Activated T-helper 2 cell treated with anti-CD3 and anti-CD28 coated beads, Interferon-gamma antibody, Interleukin-2, Interleukin-4, amounts not matched to agents 10 μg/mL and 5 μg/mL and 100 μg/mL, durations not matched to agents 14 hours and 24 hours and 36 hours (primary cell): ENCODE measurements at regions of chr15 and their contacts with region 1.

Region 1: GRCh38 chr15:69760890-69761568 is 308.4 kb downstream of the RPLP1 start:
- DNase-seq: peak; percentile 85
- H3K4me3 Mint-ChIP-seq: peak overlapping the region; percentile 37
- H3K27ac Mint-ChIP-seq: peak overlapping the region; percentile 92
- H3K4me1 Mint-ChIP-seq: peaks cover 65% of the 10 kb centered on the region
- H3K27me3 Mint-ChIP-seq: peaks cover 6% of the 10 kb centered on the region

Region 2: DNA sequence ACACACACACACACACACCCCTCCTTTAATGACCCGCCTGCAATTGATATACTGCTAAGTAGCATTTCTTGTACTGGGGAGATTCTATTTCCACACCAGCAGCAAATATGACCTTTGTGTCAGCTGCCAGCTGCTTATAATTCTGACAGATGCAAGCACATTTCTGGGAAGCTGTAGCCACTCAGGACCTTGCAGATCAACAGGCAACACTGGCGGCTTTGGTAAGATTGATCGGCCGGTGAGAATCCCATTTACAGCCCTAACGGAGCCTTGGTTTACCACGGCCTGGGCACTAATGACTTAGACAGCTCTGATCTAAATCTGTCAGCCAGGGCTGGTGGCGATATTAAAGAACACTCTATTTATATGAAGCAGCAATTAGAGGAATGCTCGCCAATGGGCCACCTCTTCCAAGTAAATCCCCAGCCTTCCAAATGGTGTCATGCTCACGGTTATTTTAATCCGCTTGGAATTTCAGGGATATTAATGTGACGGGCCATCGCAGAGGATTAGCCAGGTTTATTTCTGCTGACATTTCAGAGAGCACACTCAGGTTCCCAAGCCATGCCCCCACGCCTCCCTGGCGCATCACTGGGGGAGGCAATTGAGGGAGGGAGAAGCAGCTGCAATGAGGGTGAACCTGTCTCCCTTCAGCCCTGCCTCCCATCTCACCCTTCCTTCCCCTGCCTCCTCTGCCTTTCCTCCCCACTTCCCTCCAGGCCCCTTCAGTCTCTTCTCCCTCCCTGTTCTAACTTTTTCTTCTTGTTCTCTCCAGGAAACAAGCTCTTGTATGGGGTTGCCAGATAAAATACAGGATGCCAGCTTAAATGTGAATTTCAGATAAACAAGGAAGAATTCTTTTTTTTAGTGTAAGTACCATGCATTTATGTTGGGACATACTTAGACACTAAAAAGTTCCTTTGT is 49.7 kb after region 1 on chr15:
- intact Hi-C with region 1: no loop called
- DNase-seq: no peak
- H3K4me3 Mint-ChIP-seq: no peak overlapping the region
- H3K27ac Mint-ChIP-seq: no peak overlapping the region
- H3K4me1 Mint-ChIP-seq: peaks cover 5% of the 10 kb centered on the region
- H3K27me3 Mint-ChIP-seq: peaks cover 14% of the 10 kb centered on the region

Region 3: GRCh38 chr15:70091726-70092463 is 330.9 kb after region 1 on chr15:
- intact Hi-C with region 1: loop called (anchors 1 kb)
- DNase-seq: peak; percentile 37
- H3K4me3 Mint-ChIP-seq: peak overlapping the region; percentile 67
- H3K27ac Mint-ChIP-seq: no peak overlapping the region
- H3K4me1 Mint-ChIP-seq: peaks cover 64% of the 10 kb centered on the region
- H3K27me3 Mint-ChIP-seq: no peaks in the 10 kb centered on the region

Region 4: DNA sequence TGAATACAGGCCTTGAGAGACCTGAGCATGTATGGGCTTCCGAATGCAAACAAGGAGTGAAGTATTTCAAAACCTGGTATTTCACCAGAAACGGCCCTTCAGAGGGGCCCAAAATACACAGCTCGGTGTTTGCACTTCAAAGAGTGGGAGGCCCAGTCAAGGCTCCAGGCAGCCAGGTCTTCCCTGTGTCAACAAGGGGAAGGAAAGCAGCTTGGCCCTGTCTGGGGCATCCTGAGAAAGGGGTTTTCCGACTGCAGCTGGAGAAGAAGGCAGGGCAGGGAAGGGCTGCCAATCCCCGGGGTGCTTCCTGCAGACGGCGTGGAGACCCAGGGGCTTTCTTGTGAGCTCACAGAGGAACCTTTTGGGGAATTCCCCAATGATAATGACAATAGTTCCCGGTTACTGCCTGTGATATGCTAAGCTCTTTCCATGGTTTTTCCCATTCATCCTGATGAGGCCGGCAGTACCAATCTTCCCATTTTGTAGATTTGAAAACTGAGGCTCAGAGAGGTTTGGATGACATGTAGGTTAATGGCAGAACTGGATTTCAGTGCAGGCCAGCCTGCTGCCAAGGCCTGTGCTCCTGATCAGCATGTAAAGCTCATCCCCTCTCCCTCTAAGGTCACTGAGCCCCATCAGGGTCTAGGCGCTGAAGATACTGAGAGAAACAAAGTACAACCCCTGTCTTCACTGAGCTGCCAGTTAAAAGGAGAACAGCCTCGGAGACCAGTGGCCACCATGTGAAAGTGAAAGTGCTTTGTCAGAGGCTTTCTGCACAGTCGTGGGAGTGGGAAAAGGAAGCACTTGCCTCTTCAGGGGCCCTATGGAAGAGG is 379.7 kb after region 1 on chr15:
- intact Hi-C with region 1: loop called (anchors 1 kb)
- DNase-seq: no peak
- H3K4me3 Mint-ChIP-seq: no peak overlapping the region
- H3K27ac Mint-ChIP-seq: peak overlapping the region; percentile 40
- H3K4me1 Mint-ChIP-seq: peaks cover 34% of the 10 kb centered on the region
- H3K27me3 Mint-ChIP-seq: peaks cover 56% of the 10 kb centered on the region